ENCODE measurements at regions of chr5 and their contacts with region 1.

Region 1: DNA sequence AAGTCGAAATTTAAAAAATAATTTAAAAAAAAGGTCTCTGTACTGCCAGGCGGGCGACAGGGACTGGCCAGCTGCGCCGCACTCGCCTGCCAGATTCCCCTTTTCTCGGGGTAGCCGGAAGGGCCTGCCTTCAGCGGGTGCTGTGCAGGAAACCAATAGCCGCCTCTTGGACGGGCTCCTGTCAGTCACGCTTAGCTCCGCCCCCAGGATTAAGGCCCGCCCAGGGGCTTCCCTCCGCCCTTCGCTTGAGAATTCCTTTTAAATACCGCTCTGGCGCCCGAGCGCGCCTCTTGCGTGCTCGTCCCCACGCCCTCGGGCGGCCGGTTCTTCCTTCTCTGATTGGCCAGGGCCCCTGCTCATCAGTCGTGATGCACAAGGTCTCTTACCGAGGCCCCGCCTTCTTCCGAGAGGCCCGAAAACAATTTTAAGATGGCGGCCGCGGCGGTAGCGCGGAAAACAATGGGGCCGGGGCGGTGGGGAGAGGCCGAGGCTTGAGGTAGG is at the start of gene MAML1:
- DNase-seq: peak; percentile 100
- H3K4me3 ChIP-seq: peak within 1 kb of the TSS; percentile 92 to 99
- H3K27ac ChIP-seq: peak within 1 kb of the TSS; percentile 92 to 97
- H3K4me1 ChIP-seq: no peaks in the 10 kb centered on the region
- H3K27me3 ChIP-seq: no peaks in the 10 kb centered on the region
- CTCF ChIP-seq: peak in 1 of 4 experiments; percentile 8
- POLR2A ChIP-seq: peak; percentile 93
- total RNA-seq, gene MAML1: 33.9 to 54.7 TPM

Region 2: DNA sequence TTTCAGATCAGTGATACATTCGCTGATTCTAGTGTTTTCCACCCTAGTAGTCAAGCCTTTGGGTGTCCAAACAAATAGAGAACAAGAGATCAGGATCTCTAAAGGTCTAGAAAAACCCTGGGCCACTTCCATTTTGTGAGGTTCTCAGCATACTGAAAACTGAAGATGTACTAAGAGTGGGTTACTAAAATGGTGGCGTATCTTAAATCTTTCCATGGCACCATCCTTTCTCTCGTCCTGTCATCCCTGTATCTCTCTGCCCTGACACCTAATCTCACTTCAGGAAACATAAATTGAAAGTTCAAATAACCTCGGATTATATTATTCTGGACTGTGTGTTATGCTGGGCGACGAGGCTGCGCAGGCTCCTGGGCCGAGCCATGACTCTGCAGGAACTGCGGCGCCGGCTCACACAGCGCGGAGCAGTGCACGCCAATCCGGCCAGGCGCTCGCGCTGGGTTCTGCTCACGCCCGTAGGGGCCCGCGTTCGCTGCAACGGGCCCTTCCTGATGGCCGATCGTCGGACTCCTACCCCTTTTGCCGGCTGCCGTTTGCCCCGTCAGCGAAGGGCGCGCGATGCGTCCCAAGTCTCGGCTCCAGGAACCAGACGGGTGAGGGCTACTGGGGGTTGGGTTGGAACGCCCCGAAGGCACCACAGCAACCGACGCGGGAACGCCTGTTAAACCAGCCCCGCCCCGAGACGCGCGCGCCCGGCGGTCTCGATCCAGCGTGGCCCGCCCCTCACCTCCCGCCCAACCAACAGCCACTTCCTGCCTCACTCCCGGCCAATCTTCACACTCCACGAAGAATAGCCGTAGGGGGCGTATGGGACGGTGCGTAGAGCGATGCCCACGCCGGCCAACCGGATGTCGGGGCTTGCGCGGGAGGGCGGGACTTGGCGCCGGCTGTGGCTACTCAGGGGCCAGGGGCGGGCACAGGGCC is 34.2 kb before region 1 on chr5:
- intact Hi-C with region 1: loop called (anchors 2 kb)
- DNase-seq: peak; percentile 99
- H3K4me3 ChIP-seq: peak overlapping the region; percentile 77 to 98
- H3K27ac ChIP-seq: peak overlapping the region; percentile 91 to 95
- H3K4me1 ChIP-seq: no peaks in the 10 kb centered on the region
- H3K27me3 ChIP-seq: no peaks in the 10 kb centered on the region
- CTCF ChIP-seq: peak in 2 of 4 experiments; percentile 10 to 44
- POLR2A ChIP-seq: peak; percentile 82

Region 3: GRCh38 chr5:179963375-179963774 is 230.9 kb after region 1 on chr5:
- intact Hi-C with region 1: no loop called
- DNase-seq: no peak
- H3K4me3 ChIP-seq: no peak overlapping the region
- H3K27ac ChIP-seq: no peak overlapping the region
- H3K4me1 ChIP-seq: no peaks in the 10 kb centered on the region
- H3K27me3 ChIP-seq: no peaks in the 10 kb centered on the region
- CTCF ChIP-seq: no peak
- POLR2A ChIP-seq: no peak

Region 4: DNA sequence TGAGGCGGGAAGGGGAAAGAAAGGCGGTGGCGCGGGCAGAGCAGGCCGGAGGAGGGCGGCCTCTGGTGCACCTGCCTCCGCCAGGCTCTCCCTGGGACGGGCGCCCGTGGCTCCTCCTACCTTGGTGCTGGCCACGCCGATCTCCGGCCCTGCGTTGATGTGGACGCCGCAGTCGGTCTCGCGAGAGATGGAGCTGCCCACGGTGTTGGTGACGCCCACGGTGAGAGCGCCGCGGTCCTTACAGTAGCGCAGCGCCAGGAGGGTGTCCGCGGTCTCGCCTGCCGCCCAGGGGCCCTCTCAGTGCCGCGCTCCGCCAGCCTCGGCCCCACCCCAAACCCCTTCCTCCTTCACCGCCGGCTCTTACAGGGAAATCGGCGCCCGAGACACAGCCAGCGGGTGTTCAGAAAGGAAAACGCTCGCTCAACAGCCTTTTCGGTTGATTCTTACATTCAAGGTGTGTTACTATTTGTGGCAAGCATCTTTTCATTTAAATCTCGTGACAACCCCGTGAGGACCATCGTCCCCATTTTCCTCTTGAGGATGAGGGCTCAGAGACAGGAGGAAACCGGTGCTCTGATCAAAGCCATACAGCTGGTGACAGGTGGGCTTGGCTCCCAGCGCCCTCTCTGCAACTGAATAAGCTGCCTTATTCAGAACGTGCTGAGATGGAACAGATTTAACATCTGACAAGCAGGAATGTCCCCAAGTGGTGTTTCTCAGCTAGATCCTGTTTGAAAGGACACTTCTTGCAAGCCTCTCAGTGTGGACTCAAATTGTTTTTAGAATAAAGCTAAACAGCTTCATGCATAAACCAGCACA is 581.4 kb after region 1 on chr5:
- intact Hi-C with region 1: no loop called
- DNase-seq: no peak
- H3K4me3 ChIP-seq: no peak overlapping the region
- H3K27ac ChIP-seq: no peak overlapping the region
- H3K4me1 ChIP-seq: no peaks in the 10 kb centered on the region
- H3K27me3 ChIP-seq: no peaks in the 10 kb centered on the region
- CTCF ChIP-seq: no peak
- POLR2A ChIP-seq: no peak

Region 5: GRCh38 chr5:180343831-180344327 is 611.4 kb after region 1 on chr5:
- intact Hi-C with region 1: no loop called
- DNase-seq: no peak
- H3K4me3 ChIP-seq: no peak overlapping the region
- H3K27ac ChIP-seq: no peak overlapping the region
- H3K4me1 ChIP-seq: no peaks in the 10 kb centered on the region
- H3K27me3 ChIP-seq: no peaks in the 10 kb centered on the region
- CTCF ChIP-seq: no peak
- POLR2A ChIP-seq: no peak

Region 6: DNA sequence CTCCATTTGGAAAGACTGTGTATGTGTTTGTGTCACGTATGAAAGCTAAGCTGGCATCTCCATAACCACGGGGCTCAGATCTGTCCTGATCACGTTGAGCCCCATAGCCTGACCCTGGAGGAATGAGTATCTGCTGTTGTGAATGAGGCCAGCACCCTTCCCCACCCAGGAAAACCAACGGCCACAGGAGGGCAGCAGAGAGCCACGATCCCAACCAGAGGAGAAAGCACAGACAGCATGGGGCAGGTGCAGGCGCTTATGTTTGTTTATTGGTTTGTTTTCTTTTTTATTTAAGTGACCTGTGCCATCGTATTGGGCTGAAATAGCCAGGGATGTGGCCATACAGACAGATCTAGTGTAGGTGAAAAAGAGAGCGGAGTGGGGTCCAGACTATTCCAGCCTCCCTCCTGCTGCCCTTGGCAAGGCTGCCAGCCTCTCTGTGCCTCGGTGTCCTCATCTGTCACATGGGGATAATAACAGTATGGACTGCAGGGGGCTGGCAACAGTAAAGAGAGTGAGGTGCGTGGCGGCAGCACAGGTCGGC is 1426.9 kb after region 1 on chr5:
- intact Hi-C with region 1: no loop called
- DNase-seq: peak; percentile 81
- H3K4me3 ChIP-seq: no peak overlapping the region
- H3K27ac ChIP-seq: no peak overlapping the region
- H3K4me1 ChIP-seq: no peaks in the 10 kb centered on the region
- H3K27me3 ChIP-seq: no peaks in the 10 kb centered on the region
- CTCF ChIP-seq: peak; percentile 55 to 84 (median 82)
- POLR2A ChIP-seq: no peak